ENCODE measurements at regions of chr11 and their contacts with region 1.

Region 1: GRCh38 chr11:47020793-47021526 is 84.4 kb downstream of the CSTPP1 start:
- DNase-seq: no peak
- H3K4me3 Mint-ChIP-seq: no peak overlapping the region
- H3K27ac Mint-ChIP-seq: no peak overlapping the region
- H3K4me1 Mint-ChIP-seq: peaks cover 2% of the 10 kb centered on the region
- H3K27me3 Mint-ChIP-seq: peaks cover 3% of the 10 kb centered on the region

Region 2: GRCh38 chr11:46916286-46917108 is 104.5 kb before region 1 on chr11:
- intact Hi-C with region 1: loop called (anchors 10 kb)
- DNase-seq: no peak
- H3K4me3 Mint-ChIP-seq: peak overlapping the region; percentile 70
- H3K27ac Mint-ChIP-seq: no peak overlapping the region
- H3K4me1 Mint-ChIP-seq: peaks cover 21% of the 10 kb centered on the region
- H3K27me3 Mint-ChIP-seq: peaks cover 71% of the 10 kb centered on the region

Region 3: DNA sequence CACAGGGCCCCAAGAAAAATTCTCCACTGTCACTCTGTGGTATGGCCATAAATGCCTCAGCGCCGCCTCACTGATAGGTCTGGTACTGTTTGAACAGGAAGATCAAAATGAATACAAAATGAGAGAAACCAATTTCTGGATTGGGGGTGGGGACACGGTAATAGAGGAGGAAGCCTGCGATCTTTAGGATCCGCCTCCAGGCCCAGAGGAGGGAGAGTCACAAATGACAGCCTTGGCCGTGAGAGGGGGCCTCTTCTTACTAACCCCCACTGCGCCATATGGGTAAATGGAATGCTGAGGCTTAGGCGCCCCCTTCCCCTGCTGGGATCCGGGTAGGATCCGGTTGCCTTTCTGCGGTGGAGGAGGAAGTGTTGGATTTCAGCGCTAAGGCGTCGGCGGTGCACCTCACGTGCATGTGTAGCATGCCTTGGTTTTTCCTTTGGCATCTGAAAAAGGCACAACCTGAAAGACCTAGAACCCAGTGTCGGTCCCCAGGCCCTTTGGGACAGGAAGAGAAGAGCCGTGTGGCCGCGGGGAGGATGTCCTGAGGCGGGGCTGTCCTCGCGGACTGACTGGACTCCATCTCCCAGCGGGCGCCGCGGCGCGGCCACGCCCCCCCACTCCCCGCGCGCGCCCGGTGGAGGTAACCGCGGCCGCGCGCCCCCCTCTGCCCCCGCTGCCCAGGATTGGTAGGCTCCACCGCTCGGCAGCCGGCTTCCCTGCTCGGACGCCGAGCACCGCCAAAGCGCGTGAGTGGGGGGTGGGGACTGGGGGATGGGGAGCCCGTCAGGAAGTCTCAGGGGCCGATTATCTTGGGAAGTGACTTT is 248.3 kb after region 1 on chr11:
- intact Hi-C with region 1: no loop called
- DNase-seq: peak; percentile 94
- H3K4me3 Mint-ChIP-seq: peak overlapping the region; percentile 81
- H3K27ac Mint-ChIP-seq: peak overlapping the region; percentile 97
- H3K4me1 Mint-ChIP-seq: peaks cover 53% of the 10 kb centered on the region
- H3K27me3 Mint-ChIP-seq: no peaks in the 10 kb centered on the region